ENCODE measurements at regions of chr1 and their contacts with region 1.

Region 1: GRCh38 chr1:109773146-109773899 is 9.6 kb upstream of the EPS8L3 start:
- DNase-seq: peak; percentile 87
- ATAC-seq: peak; percentile 88
- H3K4me3 Mint-ChIP-seq: no peak overlapping the region
- H3K27ac Mint-ChIP-seq: no peak overlapping the region
- H3K4me1 Mint-ChIP-seq: peaks cover 8% of the 10 kb centered on the region
- H3K27me3 Mint-ChIP-seq: peaks cover 3% of the 10 kb centered on the region

Region 2: GRCh38 chr1:109643385-109644230 is 129.7 kb before region 1 on chr1:
- CTCF ChIA-PET with region 1: interaction called, 269 read pairs
- DNase-seq: peak; percentile 93
- ATAC-seq: peak; percentile 97
- H3K4me3 Mint-ChIP-seq: no peak overlapping the region
- H3K27ac Mint-ChIP-seq: no peak overlapping the region
- H3K4me1 Mint-ChIP-seq: peaks cover 11% of the 10 kb centered on the region
- H3K27me3 Mint-ChIP-seq: peaks cover 2% of the 10 kb centered on the region

Region 3: DNA sequence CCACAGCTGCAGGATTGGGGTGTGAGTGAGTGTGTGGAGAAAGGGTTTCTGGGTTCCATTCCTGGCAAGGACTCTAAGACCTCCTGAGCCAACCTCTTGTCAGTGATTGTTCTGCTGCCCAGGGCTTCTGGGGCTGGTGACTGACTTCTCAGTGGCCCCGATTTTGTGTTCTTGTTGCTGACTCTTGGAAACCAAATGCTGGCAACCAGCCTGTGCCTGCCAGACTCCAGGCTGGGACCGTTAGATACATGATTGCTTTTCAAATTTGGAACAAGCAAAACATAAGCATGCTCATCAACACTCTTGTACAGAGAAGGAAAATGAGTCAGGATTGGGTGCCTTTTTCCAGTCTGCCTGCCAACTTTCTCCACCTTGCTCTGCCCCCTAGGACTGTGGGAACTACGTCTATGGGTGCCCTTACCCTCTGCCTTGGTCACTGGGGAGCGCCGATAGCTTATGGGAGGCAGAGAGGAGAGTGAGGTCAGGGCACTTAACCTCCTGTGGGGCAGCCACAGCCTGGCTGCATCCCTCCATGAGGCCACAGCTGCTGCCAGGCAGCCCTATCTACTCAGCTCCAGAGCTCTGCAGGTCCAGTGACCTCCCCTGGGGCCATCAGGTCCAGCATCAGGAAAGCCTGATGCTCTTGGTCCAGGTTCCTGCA is 29.7 kb after region 1 on chr1:
- CTCF ChIA-PET with region 1: interaction called, 18 read pairs
- DNase-seq: peak; percentile 41
- ATAC-seq: peak; percentile 5
- H3K4me3 Mint-ChIP-seq: peak overlapping the region; percentile 75
- H3K27ac Mint-ChIP-seq: peak overlapping the region; percentile 99
- H3K4me1 Mint-ChIP-seq: peaks cover 91% of the 10 kb centered on the region
- H3K27me3 Mint-ChIP-seq: no peaks in the 10 kb centered on the region

Region 4: GRCh38 chr1:109917768-109918606 is 144.7 kb after region 1 on chr1:
- CTCF ChIA-PET with region 1: interaction called, 14 read pairs
- DNase-seq: no peak
- ATAC-seq: no peak
- H3K4me3 Mint-ChIP-seq: no peak overlapping the region
- H3K27ac Mint-ChIP-seq: peak overlapping the region; percentile 21
- H3K4me1 Mint-ChIP-seq: peaks cover 64% of the 10 kb centered on the region
- H3K27me3 Mint-ChIP-seq: no peaks in the 10 kb centered on the region

Region 5: DNA sequence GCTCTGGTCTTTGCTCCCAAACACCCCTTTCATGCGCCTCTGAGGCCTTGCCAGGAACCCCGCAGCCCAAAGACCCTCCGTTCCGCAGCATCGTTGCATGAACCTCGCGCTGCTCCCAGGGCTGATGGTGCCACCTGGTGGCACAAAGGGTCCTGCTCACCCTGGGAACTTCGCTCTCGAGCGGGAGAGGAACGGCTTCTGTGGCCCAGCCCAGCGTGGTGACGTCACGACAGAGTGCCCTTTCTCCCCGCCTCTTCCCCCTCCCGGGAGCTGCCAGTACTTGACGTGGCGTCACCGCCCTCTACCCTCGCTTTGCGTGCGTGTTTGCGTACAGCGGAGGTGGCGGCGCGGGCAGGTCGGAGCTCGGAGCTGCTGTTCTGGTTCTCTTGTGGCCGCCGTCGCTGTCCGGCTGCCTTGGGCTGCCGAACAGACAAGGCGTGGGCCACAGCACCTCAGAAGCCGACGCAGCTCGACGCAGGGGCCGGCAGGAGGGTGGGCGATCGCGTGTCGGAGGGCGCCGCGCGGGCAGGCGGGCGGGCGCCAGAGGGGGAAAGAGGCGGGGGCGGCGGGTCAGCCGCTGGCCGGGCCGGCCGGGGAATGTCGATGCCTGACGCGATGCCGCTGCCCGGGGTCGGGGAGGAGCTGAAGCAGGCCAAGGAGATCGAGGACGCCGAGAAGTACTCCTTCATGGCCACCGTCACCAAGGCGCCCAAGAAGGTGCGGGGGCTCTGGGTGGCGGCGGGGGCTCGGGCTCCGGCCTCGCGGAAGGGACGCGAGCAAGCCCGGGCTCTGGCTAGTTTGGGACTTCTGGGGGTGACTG is 211.3 kb after region 1 on chr1 and contains the start of gene AHCYL1:
- CTCF ChIA-PET with region 1: interaction called, 790 read pairs
- DNase-seq: peak; percentile 100
- ATAC-seq: peak; percentile 98
- H3K4me3 Mint-ChIP-seq: peak within 1 kb of the TSS; percentile 99
- H3K27ac Mint-ChIP-seq: peak within 1 kb of the TSS; percentile 98
- H3K4me1 Mint-ChIP-seq: peaks cover 43% of the 10 kb centered on the region
- H3K27me3 Mint-ChIP-seq: no peaks in the 10 kb centered on the region
- total RNA-seq, gene AHCYL1: 67.6 to 70.0 TPM

Measured in activated CD8-positive, alpha-beta memory T cell treated with anti-CD3 and anti-CD28 coated beads, Interleukin-2, amount 10 ng/mL, durations not matched to agents 7 days and 5 days (primary cell).